Activated B cell treated with CpG ODN at 0.5 μM for 24 hours (primary cell): ENCODE measurements at regions of chr13 and their contacts with region 1.

Region 1: GRCh38 chr13:49517461-49517860 is 21.7 kb downstream of the PHF11 start:
- DNase-seq: no peak
- ATAC-seq: no peak
- H3K4me3 Mint-ChIP-seq: no peak overlapping the region
- H3K27ac Mint-ChIP-seq: no peak overlapping the region
- H3K4me1 Mint-ChIP-seq: peaks cover 4% of the 10 kb centered on the region
- H3K27me3 Mint-ChIP-seq: no peaks in the 10 kb centered on the region
- CTCF ChIP-seq: no peak

Region 2: DNA sequence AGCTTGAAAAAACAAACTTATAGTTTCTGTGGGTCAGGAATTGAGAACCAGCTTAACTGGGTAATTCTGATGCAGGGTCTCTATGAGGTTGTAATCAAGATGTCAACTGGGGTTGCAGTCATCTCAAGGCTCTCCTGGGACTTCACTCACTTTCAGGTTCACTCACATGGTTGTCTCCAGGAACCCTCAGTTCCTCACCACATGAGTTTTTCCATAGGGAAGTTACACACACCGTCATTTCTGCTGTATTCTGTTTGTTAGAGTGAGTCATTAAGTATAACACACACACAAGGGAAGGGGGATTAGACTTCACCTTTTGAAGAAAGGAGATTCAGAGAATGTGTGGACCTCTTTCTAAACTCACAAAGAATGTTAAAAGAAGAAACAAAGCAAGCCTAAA is 332.2 kb before region 1 on chr13:
- CTCF ChIA-PET with region 1: no interaction called
- POLR2A ChIA-PET with region 1: no interaction called
- intact Hi-C with region 1: no loop called
- DNase-seq: no peak
- ATAC-seq: peak; percentile 21
- H3K4me3 Mint-ChIP-seq: no peak overlapping the region
- H3K27ac Mint-ChIP-seq: peak overlapping the region; percentile 37
- H3K4me1 Mint-ChIP-seq: peaks cover 5% of the 10 kb centered on the region
- H3K27me3 Mint-ChIP-seq: no peaks in the 10 kb centered on the region
- CTCF ChIP-seq: no peak

Region 3: DNA sequence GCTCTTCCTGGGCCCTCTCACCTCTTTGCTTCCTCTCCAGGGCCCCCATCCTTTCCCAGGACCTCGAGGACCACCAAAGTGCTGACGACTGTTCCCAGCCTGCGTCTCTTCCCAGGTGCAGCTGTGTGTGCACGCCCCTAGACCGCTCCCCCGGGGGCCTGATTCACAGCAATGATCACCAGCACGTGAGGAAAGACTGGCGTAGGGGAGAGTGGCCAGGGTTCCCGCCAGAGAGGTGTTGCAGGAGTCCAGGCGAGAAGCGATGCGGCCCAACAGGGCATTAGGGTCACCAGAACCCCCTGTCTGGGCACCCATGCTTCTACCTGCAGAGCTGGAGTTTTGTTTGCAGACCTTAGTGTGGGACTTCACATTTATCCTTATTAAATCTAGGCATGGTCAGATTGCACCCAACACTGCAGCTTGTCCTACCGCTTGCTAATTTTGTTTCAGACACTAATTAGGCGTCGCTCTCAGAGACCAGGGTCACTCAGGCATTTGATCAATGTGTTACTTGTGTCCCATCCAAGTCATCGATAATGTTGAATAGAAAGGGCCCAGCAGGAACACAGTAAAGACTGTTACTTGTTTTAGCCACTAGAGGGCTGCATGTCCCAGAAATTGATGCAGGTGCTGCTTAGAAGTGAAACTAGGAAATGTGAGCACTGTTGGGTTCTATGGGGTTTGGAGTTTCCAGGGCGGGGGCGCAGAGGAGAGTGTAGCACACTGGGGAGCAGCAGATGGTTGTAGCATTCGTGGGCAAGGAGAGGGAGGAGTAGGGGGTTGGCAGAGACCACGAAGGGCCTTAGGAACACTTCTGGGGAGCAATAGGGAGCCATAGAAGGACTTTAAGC is 216.5 kb before region 1 on chr13:
- CTCF ChIA-PET with region 1: interaction called, 3 read pairs
- POLR2A ChIA-PET with region 1: no interaction called
- intact Hi-C with region 1: loop called (anchors 1 kb)
- DNase-seq: peak; percentile 43
- ATAC-seq: peak; percentile 98
- H3K4me3 Mint-ChIP-seq: peak overlapping the region; percentile 80
- H3K27ac Mint-ChIP-seq: peak overlapping the region; percentile 72
- H3K4me1 Mint-ChIP-seq: peaks cover 33% of the 10 kb centered on the region
- H3K27me3 Mint-ChIP-seq: no peaks in the 10 kb centered on the region
- CTCF ChIP-seq: no peak

Region 4: DNA sequence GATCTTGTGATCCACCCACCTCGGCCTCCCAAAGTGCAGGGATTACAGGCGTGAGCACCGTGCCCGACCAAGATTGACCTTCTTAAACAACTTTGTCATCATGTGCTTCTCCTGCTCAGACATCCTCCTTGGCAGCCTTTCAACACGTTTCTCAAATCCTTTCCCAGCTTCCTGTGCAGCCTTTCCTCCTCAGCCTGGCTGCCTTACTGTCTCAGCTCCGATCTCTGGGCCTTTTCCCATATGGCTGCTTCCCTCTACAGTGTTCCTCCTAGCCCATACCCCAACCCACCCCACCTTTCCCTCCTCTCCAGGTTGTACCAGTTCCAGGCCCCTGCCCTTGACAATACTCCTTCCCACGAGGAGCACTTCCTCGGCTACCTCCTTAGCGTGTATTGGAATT is 14.5 kb before region 1 on chr13:
- CTCF ChIA-PET with region 1: no interaction called
- POLR2A ChIA-PET with region 1: no interaction called
- intact Hi-C with region 1: loop called (anchors 2 kb)
- DNase-seq: no peak
- ATAC-seq: no peak
- H3K4me3 Mint-ChIP-seq: no peak overlapping the region
- H3K27ac Mint-ChIP-seq: no peak overlapping the region
- H3K4me1 Mint-ChIP-seq: peaks cover 22% of the 10 kb centered on the region
- H3K27me3 Mint-ChIP-seq: no peaks in the 10 kb centered on the region
- CTCF ChIP-seq: no peak